ENCODE measurements at regions of chr2 and their contacts with region 1.

Region 1: DNA sequence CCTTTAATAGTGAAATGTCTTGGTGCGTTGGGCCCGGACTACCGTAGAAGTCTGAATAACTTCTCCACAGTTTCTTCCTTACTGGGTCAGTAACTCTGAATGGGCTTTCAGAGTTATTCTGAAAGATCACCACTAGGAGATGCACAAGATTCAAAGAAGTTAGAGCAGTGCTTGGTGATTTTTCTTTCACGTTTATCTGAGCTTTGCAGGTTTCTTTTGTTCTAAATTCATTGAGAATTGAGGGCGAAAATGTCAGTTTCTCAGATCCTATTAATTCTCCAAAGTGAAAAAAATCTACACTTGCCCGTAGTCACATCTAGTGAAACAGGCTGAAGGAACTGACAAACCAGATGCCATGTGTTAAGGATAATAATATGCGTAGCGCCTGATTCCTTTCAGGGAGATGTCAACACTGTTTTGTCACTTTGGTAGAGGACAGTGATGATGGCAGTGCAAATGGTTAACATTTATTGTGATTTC is 70.1 kb downstream of the QPCT start:
- DNase-seq: no peak
- H3K4me3 ChIP-seq: no peak overlapping the region
- H3K27ac ChIP-seq: no peak overlapping the region
- H3K4me1 ChIP-seq: no peaks in the 10 kb centered on the region
- H3K27me3 ChIP-seq: no peaks in the 10 kb centered on the region
- CTCF ChIP-seq: peak in 2 of 3 experiments; percentile 75 to 82; a peak in 3 of 4 replicates
- EP300 ChIP-seq: no peak
- POLR2A ChIP-seq: no peak
- RAD21 ChIP-seq: peak; percentile 97 to 99

Region 2: GRCh38 chr2:37389989-37390765 is 24.3 kb before region 1 on chr2:
- CTCF ChIA-PET with region 1: interaction called, 52 read pairs
- POLR2A ChIA-PET with region 1: no interaction called
- DNase-seq: peak; percentile 15 to 44
- H3K4me3 ChIP-seq: no peak overlapping the region
- H3K27ac ChIP-seq: no peak overlapping the region
- H3K4me1 ChIP-seq: peaks cover 0 to 9% (median 0%) of the 10 kb centered on the region in 4 experiments; a peak in 4 of 7 replicates
- H3K27me3 ChIP-seq: no peaks in the 10 kb centered on the region
- CTCF ChIP-seq: no peak
- EP300 ChIP-seq: no peak
- POLR2A ChIP-seq: no peak
- RAD21 ChIP-seq: no peak

Region 3: GRCh38 chr2:37402636-37403035 is 11.9 kb before region 1 on chr2:
- CTCF ChIA-PET with region 1: interaction called, 52 read pairs
- POLR2A ChIA-PET with region 1: interaction called, 3 read pairs
- DNase-seq: no peak
- H3K4me3 ChIP-seq: no peak overlapping the region
- H3K27ac ChIP-seq: no peak overlapping the region
- H3K4me1 ChIP-seq: no peaks in the 10 kb centered on the region
- H3K27me3 ChIP-seq: no peaks in the 10 kb centered on the region
- CTCF ChIP-seq: no peak
- EP300 ChIP-seq: no peak
- POLR2A ChIP-seq: no peak
- RAD21 ChIP-seq: no peak

Region 4: DNA sequence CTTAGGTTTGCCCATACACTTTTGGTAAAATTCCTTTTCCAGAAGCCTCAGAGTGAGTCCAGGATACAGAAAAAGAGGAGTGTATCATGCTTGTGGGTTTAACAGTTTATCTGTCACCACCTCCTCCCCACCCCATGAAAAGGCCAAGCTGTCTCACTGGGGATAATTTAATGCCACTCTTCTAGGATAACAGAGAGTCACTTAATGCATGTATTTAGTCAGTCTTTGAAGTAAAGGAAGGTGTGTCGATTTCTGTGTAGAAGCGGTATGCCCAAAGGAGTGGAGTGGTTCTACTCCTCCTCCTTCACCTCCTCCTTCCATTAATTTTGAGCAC is 46.4 kb after region 1 on chr2:
- CTCF ChIA-PET with region 1: no interaction called
- POLR2A ChIA-PET with region 1: no interaction called
- DNase-seq: no peak
- H3K4me3 ChIP-seq: no peak overlapping the region
- H3K27ac ChIP-seq: no peak overlapping the region
- H3K4me1 ChIP-seq: no peaks in the 10 kb centered on the region
- H3K27me3 ChIP-seq: no peaks in the 10 kb centered on the region
- CTCF ChIP-seq: no peak
- EP300 ChIP-seq: no peak
- POLR2A ChIP-seq: no peak
- RAD21 ChIP-seq: no peak

Region 5: GRCh38 chr2:37537316-37537715 is 122.8 kb after region 1 on chr2:
- CTCF ChIA-PET with region 1: interaction called, 10 read pairs
- POLR2A ChIA-PET with region 1: no interaction called
- DNase-seq: no peak
- H3K4me3 ChIP-seq: no peak overlapping the region
- H3K27ac ChIP-seq: no peak overlapping the region
- H3K4me1 ChIP-seq: no peaks in the 10 kb centered on the region
- H3K27me3 ChIP-seq: no peaks in the 10 kb centered on the region
- CTCF ChIP-seq: no peak
- EP300 ChIP-seq: no peak
- POLR2A ChIP-seq: no peak
- RAD21 ChIP-seq: no peak

Region 6: GRCh38 chr2:37832590-37833197 is 418.2 kb after region 1 on chr2:
- CTCF ChIA-PET with region 1: interaction called, 132 read pairs
- POLR2A ChIA-PET with region 1: interaction called, 3 read pairs
- DNase-seq: peak; percentile 41 to 85
- H3K4me3 ChIP-seq: no peak overlapping the region
- H3K27ac ChIP-seq: no peak overlapping the region
- H3K4me1 ChIP-seq: no peaks in the 10 kb centered on the region
- H3K27me3 ChIP-seq: no peaks in the 10 kb centered on the region
- CTCF ChIP-seq: peak; percentile 61 to 78 (median 73)
- EP300 ChIP-seq: no peak
- POLR2A ChIP-seq: no peak
- RAD21 ChIP-seq: peak; percentile 93 to 95

Region 7: GRCh38 chr2:37885329-37885993 is 471.0 kb after region 1 on chr2:
- CTCF ChIA-PET with region 1: interaction called, 11 read pairs
- POLR2A ChIA-PET with region 1: no interaction called
- DNase-seq: no peak
- H3K4me3 ChIP-seq: no peak overlapping the region; a peak in 2 of 8 replicates
- H3K27ac ChIP-seq: no peak overlapping the region
- H3K4me1 ChIP-seq: peaks cover 4 to 14% (median 7%) of the 10 kb centered on the region in 4 experiments; a peak in 5 of 7 replicates
- H3K27me3 ChIP-seq: no peaks in the 10 kb centered on the region
- CTCF ChIP-seq: no peak
- EP300 ChIP-seq: no peak
- POLR2A ChIP-seq: no peak
- RAD21 ChIP-seq: no peak

Measured in H1 (cell line).